ENCODE measurements at regions of chr3 and their contacts with region 1.

Region 1: GRCh38 chr3:196684548-196685407 is 27.3 kb downstream of the CEP19 start:
- DNase-seq: peak; percentile 48
- ATAC-seq: peak; percentile 77

Region 2: DNA sequence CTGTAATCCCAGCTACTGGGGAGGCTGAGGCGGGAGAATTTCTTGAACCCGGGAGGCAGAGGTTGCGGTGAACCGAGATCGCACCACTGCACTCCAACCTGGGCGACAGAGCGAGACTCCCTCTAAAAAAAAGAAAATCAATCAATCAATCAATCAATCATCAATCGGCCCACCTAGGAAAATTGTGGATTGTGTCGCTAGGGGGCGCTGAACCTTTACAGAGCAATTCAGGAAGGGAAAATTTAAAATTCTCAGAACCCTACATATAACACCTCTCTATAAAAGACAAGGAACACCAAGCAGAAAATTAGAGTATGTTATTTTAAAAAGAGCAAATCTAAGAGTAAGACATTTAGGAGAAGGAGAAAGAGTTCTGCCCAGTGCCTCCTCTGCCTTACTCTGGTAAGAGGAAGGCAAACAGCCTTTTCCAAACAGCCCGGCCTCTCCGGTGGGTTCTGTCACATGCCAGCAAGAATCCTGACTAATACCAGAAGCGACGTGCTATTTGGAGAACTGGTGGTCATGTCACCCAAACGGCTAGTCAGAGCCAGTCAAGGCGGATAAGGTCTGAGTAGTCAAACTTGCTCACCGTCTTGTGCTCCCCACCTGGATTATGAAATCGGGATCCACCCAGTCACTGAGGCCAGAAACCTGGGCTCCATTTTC is 147.3 kb before region 1 on chr3:
- intact Hi-C with region 1: loop called (anchors 10 kb)
- DNase-seq: peak; percentile 42
- ATAC-seq: no peak

Region 3: DNA sequence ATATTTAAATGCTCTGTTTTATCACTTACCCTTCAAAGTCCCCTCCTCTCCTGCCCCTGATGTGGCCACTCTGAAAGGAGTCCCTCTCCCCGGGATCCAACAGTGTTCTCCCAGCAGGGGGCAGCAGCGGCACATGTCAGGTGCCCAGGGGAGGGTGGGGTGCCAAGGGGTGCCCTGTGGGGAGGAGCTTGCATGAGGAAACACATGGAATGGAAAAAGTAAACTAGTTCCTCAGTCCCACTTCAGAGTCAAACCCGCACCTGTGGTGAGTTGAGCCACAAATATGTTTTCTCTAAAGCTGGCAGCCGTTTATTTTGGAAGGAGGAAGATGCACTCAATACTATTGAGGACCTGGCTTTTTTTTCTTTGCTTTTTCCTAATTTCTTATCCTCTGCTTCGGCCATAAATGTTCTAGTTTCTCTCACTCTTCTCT is 75.4 kb before region 1 on chr3:
- intact Hi-C with region 1: loop called (anchors 5 kb)
- DNase-seq: peak; percentile 91
- ATAC-seq: peak; percentile 95